GM12878 (cell line): ENCODE measurements at regions of chr5 and their contacts with region 1.

Region 1: GRCh38 chr5:157148734-157149615 is 6.3 kb upstream of the MED7 start:
- DNase-seq: peak; percentile 40
- ATAC-seq: peak; percentile 92
- H3K4me3 ChIP-seq: no peak overlapping the region
- H3K27ac ChIP-seq: no peak overlapping the region
- H3K4me1 ChIP-seq: no peaks in the 10 kb centered on the region
- H3K27me3 ChIP-seq: no peaks in the 10 kb centered on the region
- CTCF ChIP-seq: peak; percentile 73 to 91 (median 90)
- EP300 ChIP-seq: no peak
- POLR2A ChIP-seq: no peak
- RAD21 ChIP-seq: peak; percentile 99

Region 2: GRCh38 chr5:156850206-156850751 is 298.7 kb before region 1 on chr5 and contains the start of gene PPP1R2B:
- CTCF ChIA-PET with region 1: no interaction called
- POLR2A ChIA-PET with region 1: no interaction called
- RAD21 ChIA-PET with region 1: no interaction called
- SMC1A ChIA-PET with region 1: no interaction called
- in situ Hi-C with region 1: no loop called
- intact Hi-C with region 1: no loop called
- DNase-seq: no peak
- ATAC-seq: no peak
- H3K4me3 ChIP-seq: no peak within 1 kb of the TSS
- H3K27ac ChIP-seq: no peak within 1 kb of the TSS
- H3K4me1 ChIP-seq: no peaks in the 10 kb centered on the region
- H3K27me3 ChIP-seq: no peaks in the 10 kb centered on the region
- CTCF ChIP-seq: no peak
- EP300 ChIP-seq: no peak
- POLR2A ChIP-seq: no peak
- RAD21 ChIP-seq: no peak
- polyA plus RNA-seq, gene PPP1R2B: 0.02 TPM in 1 of 2 experiments, not detected in the other

Region 3: GRCh38 chr5:157026789-157027424 is 122.1 kb before region 1 on chr5:
- CTCF ChIA-PET with region 1: no interaction called
- POLR2A ChIA-PET with region 1: no interaction called
- RAD21 ChIA-PET with region 1: no interaction called
- SMC1A ChIA-PET with region 1: no interaction called
- in situ Hi-C with region 1: no loop called
- intact Hi-C with region 1: no loop called
- DNase-seq: no peak
- ATAC-seq: peak; percentile 48
- H3K4me3 ChIP-seq: no peak overlapping the region
- H3K27ac ChIP-seq: no peak overlapping the region
- H3K4me1 ChIP-seq: peaks cover 6% of the 10 kb centered on the region
- H3K27me3 ChIP-seq: no peaks in the 10 kb centered on the region
- CTCF ChIP-seq: peak; percentile 67 to 75 (median 69)
- EP300 ChIP-seq: no peak
- POLR2A ChIP-seq: no peak
- RAD21 ChIP-seq: peak; percentile 70

Region 4: DNA sequence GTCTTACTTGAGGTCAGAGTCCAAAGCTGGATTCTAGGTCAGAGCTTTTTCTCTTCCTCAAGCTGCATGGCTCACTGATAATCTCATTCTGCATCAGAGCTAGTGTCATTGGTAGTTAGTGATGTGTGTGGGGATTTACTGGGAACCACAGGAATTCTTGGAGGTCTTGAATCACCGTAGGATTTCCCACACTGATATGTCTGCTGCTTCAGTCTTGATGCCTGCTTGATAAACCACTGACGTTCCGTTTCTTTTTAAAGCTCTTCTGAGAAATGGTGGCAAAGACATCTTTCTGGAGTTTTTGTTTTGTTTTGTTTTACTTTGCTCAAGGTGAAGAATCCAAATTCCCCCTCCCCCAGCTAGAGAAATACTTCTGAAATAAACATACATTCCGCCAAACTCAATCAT is 18.2 kb after region 1 on chr5:
- CTCF ChIA-PET with region 1: interaction called, 27 read pairs
- POLR2A ChIA-PET with region 1: interaction called, 5 read pairs
- RAD21 ChIA-PET with region 1: interaction called, 30 read pairs
- SMC1A ChIA-PET with region 1: interaction called, 35 read pairs
- in situ Hi-C with region 1: no loop called
- intact Hi-C with region 1: no loop called
- DNase-seq: peak; percentile 16
- ATAC-seq: peak; percentile 72
- H3K4me3 ChIP-seq: no peak overlapping the region
- H3K27ac ChIP-seq: no peak overlapping the region
- H3K4me1 ChIP-seq: peaks cover 10% of the 10 kb centered on the region
- H3K27me3 ChIP-seq: no peaks in the 10 kb centered on the region; a peak in 1 of 4 replicates
- CTCF ChIP-seq: no peak
- EP300 ChIP-seq: no peak
- POLR2A ChIP-seq: no peak
- RAD21 ChIP-seq: no peak

Region 5: DNA sequence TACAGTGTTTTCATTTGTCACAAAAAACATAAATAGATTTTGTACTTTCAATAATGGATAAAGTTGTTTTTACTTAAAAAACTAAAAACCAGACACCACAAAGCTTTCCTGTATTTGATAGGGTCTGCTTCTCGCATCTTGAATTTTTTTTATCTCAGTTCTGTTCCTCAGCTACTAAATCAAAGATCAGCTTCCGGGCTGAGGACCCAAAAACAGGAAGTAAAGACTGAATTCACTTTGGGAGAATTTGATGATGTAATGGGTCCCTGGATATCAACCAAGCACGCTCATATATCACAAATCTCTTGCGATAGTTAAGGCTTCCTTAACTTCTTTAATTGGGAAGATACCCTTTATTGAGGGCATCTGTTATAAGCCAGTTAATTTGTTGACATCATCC is 55.8 kb after region 1 on chr5:
- CTCF ChIA-PET with region 1: interaction called, 10 read pairs
- POLR2A ChIA-PET with region 1: no interaction called
- RAD21 ChIA-PET with region 1: interaction called, 4 read pairs
- SMC1A ChIA-PET with region 1: interaction called, 3 read pairs
- in situ Hi-C with region 1: no loop called
- intact Hi-C with region 1: no loop called
- DNase-seq: no peak
- ATAC-seq: no peak; the same call in 2 of the 3 replicates
- H3K4me3 ChIP-seq: no peak overlapping the region
- H3K27ac ChIP-seq: no peak overlapping the region
- H3K4me1 ChIP-seq: no peaks in the 10 kb centered on the region
- H3K27me3 ChIP-seq: no peaks in the 10 kb centered on the region
- CTCF ChIP-seq: no peak
- EP300 ChIP-seq: no peak
- POLR2A ChIP-seq: no peak
- RAD21 ChIP-seq: no peak

Region 6: GRCh38 chr5:157236423-157236822 is 87.4 kb after region 1 on chr5:
- CTCF ChIA-PET with region 1: interaction called, 38 read pairs
- POLR2A ChIA-PET with region 1: interaction called, 3 read pairs
- RAD21 ChIA-PET with region 1: interaction called, 19 read pairs
- SMC1A ChIA-PET with region 1: interaction called, 32 read pairs
- in situ Hi-C with region 1: no loop called
- intact Hi-C with region 1: no loop called
- DNase-seq: no peak
- ATAC-seq: no peak
- H3K4me3 ChIP-seq: no peak overlapping the region
- H3K27ac ChIP-seq: no peak overlapping the region
- H3K4me1 ChIP-seq: no peaks in the 10 kb centered on the region
- H3K27me3 ChIP-seq: no peaks in the 10 kb centered on the region
- CTCF ChIP-seq: no peak
- EP300 ChIP-seq: no peak
- POLR2A ChIP-seq: no peak
- RAD21 ChIP-seq: no peak

Region 7: DNA sequence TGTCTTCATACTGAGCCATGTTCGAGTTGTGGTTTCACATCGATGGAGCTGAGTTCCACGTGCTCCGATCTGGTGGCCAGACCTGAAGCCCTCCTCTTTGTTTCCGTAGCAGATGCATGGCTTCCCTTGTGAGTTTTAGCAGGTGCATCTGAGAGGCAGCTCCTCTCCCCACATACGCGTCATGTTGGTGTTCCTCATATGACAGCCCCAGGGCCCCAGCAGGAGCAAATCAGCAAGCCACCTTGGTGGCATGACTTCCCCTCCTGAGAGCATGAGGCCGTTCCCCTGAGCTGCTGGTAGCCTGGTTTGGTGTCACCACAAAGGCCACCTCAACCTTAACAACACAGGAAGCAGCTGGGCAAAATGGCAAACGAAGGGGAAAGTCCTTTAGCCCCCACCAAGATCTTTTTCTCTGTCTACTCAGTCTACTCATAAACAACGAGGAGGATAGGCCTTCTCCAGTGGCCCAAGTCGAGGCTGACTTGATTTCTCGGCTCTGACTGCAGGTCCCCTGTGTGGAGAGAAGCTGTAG is 122.8 kb after region 1 on chr5:
- CTCF ChIA-PET with region 1: interaction called, 25 read pairs
- POLR2A ChIA-PET with region 1: interaction called, 27 read pairs
- RAD21 ChIA-PET with region 1: interaction called, 24 read pairs
- SMC1A ChIA-PET with region 1: interaction called, 21 read pairs
- in situ Hi-C with region 1: no loop called
- intact Hi-C with region 1: loop called (anchors 5 kb)
- DNase-seq: peak; percentile 93
- ATAC-seq: peak; percentile 80
- H3K4me3 ChIP-seq: peak overlapping the region; percentile 60; the same call in 1 of the 2 replicates
- H3K27ac ChIP-seq: peak overlapping the region; percentile 97
- H3K4me1 ChIP-seq: peaks cover 56% of the 10 kb centered on the region
- H3K27me3 ChIP-seq: no peaks in the 10 kb centered on the region
- CTCF ChIP-seq: no peak
- EP300 ChIP-seq: peak; percentile 72 to 75; a peak in 3 of 4 replicates
- POLR2A ChIP-seq: peak; percentile 82
- RAD21 ChIP-seq: no peak

Region 8: DNA sequence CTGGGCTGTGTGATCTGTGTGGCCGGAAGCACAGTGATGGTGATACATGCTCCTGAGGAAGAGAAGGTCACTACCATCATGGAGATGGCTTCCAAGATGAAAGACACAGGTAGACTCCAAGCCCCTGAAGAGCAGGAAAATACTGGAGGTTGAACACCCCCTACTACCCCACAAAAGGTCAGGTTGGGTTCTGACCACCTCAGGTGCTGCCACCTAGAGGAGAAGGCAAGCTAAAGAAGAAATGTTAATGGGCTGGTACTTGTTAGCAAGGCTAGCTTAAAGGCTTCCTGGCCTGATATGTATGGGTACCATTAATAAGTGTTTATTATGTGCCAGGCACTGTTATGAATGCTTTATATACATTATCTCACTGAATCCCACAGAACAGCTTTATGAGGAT is 322.7 kb after region 1 on chr5:
- CTCF ChIA-PET with region 1: no interaction called
- POLR2A ChIA-PET with region 1: no interaction called
- RAD21 ChIA-PET with region 1: interaction called, 8 read pairs
- SMC1A ChIA-PET with region 1: interaction called, 9 read pairs
- in situ Hi-C with region 1: no loop called
- intact Hi-C with region 1: loop called (anchors 5 kb)
- DNase-seq: no peak
- ATAC-seq: peak; percentile 81
- H3K4me3 ChIP-seq: no peak overlapping the region
- H3K27ac ChIP-seq: no peak overlapping the region
- H3K4me1 ChIP-seq: no peaks in the 10 kb centered on the region
- H3K27me3 ChIP-seq: no peaks in the 10 kb centered on the region
- CTCF ChIP-seq: peak; percentile 48 to 66 (median 62); a peak in 5 of 6 replicates
- EP300 ChIP-seq: no peak
- POLR2A ChIP-seq: no peak
- RAD21 ChIP-seq: peak; percentile 68

Region 9: DNA sequence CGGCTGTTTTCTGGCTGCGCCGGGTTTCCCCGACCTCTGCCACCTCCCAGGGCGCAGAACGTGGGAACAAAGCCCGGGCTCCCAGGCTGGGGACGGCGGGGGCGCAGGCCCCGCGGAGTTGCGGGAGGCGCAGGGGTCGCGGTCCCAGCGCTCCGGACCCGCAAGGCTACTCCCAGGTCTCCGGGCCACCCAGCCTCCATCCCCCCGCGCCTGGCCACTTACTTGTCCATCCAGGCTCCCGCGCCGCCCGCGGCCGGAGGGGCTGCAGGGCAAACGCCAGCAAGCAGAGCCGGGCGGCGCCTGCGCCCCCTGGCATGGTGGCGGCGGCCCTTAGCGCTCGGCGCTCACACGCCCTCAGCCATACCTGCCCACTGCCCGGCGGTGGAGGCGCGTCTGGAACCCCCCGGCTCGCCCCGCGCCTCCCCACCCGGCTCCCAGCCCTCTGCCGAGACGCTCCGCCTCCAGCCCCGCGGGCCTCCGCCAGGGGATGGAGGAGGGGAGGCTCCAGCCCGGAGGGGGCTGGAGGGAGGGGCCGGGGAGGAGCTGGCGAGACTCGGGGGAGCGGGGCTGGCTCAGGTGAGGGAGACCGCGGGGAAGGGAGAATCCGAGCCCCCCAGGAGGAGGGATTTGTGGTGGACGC is 426.5 kb after region 1 on chr5 and contains the start of gene ADAM19:
- CTCF ChIA-PET with region 1: no interaction called
- POLR2A ChIA-PET with region 1: no interaction called
- RAD21 ChIA-PET with region 1: no interaction called
- SMC1A ChIA-PET with region 1: no interaction called
- in situ Hi-C with region 1: no loop called
- intact Hi-C with region 1: no loop called
- DNase-seq: no peak
- ATAC-seq: peak; percentile 77
- H3K4me3 ChIP-seq: peak within 1 kb of the TSS; percentile 75
- H3K27ac ChIP-seq: peak within 1 kb of the TSS; percentile 67
- H3K4me1 ChIP-seq: peaks cover 51% of the 10 kb centered on the region
- H3K27me3 ChIP-seq: no peaks in the 10 kb centered on the region
- CTCF ChIP-seq: no peak
- EP300 ChIP-seq: no peak
- POLR2A ChIP-seq: peak; percentile 79
- RAD21 ChIP-seq: no peak
- polyA plus RNA-seq, gene ADAM19: 16.0 to 24.4 TPM